ENCODE measurements at regions of chr10 and their contacts with region 1.

Region 1: DNA sequence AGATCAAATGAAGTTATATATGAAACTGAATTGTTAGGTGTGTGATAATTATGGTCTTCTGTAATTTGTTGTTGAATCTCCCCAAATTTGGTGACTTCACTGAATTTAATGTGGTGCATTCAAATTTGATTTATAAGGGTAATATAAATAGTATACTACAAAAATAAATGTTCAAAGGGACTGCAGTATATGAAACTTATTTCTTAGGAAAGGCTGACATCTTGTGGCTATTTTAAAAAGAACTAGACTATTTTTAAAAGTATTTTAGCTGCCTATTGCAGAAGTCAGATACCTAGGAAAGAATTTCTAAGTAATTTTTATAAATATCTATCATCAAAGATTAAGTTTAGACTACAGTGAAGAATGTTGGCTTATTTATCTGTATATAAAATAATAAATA is 36.6 kb downstream of the ATRNL1 start:
- DNase-seq: no peak
- ATAC-seq: no peak

Region 2: GRCh38 chr10:114526504-114527238 is 603.1 kb before region 1 on chr10:
- intact Hi-C with region 1: no loop called
- DNase-seq: peak; percentile 87 to 88
- ATAC-seq: peak; percentile 91

Region 3: GRCh38 chr10:114876602-114877300 is 253.0 kb before region 1 on chr10:
- intact Hi-C with region 1: loop called in 1 of 2 experiments (anchors 10 kb)
- DNase-seq: peak in 1 of 2 donors; percentile 62
- ATAC-seq: peak; percentile 88

Measured in left colon (tissue), 2 donors.